HEK293 (cell line): ENCODE measurements at regions of chr20 and their contacts with region 1.

Region 1: DNA sequence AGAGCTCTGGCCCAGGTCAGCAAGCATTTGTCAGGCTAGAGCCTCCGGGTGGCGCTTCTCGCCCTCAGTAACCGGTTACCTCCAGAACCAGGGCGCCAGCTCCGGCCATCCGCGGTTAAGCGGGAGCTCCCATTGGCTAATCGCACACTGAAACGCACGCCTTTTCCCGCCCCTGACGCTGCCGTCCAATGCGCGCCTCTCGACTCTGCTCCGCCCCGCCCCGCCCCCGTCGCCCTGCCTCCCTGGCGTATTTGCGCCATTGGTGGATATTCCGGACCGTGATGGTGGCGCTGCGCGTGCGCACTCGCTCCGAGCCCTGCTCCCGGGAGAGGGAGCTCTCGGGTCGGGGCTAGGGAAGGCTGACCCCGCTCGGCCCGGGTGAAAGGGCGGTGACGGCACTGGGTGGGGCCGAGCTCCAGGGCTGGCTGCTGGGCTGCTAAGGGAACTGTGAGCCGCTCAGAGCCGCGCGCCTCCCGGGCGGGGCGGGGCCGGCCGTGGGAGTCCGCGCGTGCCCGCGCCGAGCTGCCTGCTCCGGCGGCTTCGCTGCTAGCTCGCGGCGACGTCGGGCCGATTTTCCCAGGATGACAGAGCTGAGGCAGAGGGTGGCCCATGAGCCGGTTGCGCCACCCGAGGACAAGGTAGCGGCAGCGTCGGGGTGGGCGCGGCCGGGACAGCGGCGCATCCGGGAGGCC is at the start of gene CDS2:
- H3K4me3 ChIP-seq: peak within 1 kb of the TSS; percentile 93
- H3K27ac ChIP-seq: peak within 1 kb of the TSS; percentile 96
- H3K4me1 ChIP-seq: peaks cover 7% of the 10 kb centered on the region
- CTCF ChIP-seq: peak; percentile 91

Region 2: DNA sequence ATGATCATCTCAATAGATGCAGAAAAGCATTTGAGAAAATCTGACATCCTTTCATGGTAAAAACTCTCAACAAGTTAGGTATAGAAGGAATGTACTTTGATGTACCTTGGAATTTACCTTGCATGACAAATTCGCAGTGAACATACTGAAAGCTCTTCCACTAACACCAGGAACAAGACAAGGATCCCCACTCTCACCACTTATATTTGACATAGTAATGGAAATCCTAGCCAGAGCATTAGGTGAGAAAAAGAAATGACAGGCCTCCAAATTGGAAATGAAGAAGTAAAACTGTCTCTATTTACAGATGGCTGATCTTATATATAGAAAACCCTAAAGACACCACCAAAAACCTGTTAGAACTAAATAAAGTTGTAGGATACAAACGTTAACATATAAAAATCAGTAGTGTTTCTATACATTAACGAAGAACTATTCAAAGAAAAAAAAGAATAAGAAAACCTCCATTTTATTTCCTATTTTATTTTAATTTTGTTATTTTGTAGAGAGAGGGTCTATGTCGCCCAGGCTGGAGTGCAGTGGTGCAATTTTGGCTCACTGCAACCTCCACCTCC is 33.8 kb before region 1 on chr20:
- CTCF ChIA-PET with region 1: no interaction called
- POLR2A ChIA-PET with region 1: no interaction called
- H3K4me3 ChIP-seq: no peak overlapping the region
- H3K27ac ChIP-seq: no peak overlapping the region
- H3K4me1 ChIP-seq: peaks cover 2% of the 10 kb centered on the region; the same call in 1 of the 2 replicates
- CTCF ChIP-seq: no peak

Region 3: DNA sequence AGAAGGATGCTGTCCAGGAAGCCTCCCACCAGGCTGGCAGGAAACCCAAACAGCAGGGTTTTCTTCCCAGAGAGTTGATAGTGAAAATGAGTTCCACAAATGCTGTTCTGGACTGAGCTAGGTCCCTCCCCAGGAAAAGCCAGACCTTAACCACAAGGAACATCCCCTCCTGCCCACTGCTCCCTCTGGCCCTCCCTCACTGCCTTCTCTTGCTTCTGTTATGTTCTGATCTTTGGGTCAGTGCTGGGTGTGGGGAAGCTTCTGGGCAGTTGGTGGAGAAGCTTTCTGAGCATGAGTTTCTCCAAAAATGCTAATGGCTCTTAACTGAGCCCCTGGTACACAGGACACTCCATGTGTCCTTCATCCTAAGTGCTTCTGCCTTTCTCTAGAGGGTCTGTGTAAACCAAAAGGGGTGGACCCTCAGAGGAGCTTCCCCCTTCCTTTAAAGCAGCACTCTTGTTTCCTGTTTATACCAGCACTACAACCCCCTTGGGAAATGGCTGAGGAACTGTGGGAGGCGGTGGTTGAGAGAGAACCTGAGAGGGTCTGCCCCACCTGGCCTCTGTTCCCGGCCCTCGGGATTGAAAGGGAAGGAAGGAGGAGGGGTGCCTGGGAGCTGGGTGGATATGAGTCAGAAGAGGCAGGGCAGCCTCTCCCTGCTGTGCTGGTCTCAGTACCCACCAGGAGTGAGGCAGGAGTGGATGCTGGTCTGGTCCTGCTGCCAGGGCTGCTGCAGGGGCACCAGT is 42.2 kb after region 1 on chr20:
- CTCF ChIA-PET with region 1: interaction called, 19 read pairs
- POLR2A ChIA-PET with region 1: interaction called, 9 read pairs
- H3K4me3 ChIP-seq: no peak overlapping the region
- H3K27ac ChIP-seq: no peak overlapping the region
- H3K4me1 ChIP-seq: peaks cover 15% of the 10 kb centered on the region
- CTCF ChIP-seq: no peak

Region 4: GRCh38 chr20:5191829-5192569 is 65.3 kb after region 1 on chr20:
- CTCF ChIA-PET with region 1: interaction called, 160 read pairs
- POLR2A ChIA-PET with region 1: interaction called, 26 read pairs
- H3K4me3 ChIP-seq: no peak overlapping the region
- H3K27ac ChIP-seq: no peak overlapping the region
- H3K4me1 ChIP-seq: no peaks in the 10 kb centered on the region
- CTCF ChIP-seq: peak; percentile 73

Region 5: DNA sequence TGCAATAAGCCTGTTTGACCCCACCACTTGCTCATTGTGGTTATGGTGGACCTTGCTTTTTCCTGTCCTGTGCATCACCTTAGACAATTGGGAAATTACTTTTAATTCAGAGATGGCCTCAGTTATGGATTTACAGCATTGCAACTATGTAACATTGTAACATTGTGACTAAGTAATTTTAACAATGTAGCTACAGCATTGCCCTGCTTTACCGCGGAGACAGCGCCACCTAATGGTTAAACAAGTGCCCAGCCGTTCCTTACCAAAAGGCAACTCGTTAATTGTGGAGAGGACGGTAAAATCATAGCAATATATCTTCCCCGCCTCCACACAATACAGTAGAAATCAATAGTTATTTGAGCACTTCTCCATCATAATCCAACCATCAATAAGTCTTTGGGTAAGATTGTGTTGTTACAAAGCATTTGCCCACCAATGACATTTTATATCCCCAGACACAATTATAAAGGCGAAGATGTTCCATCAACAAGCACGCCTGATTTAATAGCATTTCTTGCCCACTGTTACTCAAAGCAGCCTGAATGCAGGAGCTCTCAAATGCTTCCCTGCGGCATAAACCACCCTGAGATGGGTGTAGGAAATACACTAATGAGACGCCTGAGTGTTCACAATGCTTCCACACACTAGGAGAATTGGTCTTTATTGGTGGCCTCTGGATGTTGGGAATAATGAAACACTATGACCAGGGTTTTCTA is 96.4 kb after region 1 on chr20:
- CTCF ChIA-PET with region 1: interaction called, 15 read pairs
- POLR2A ChIA-PET with region 1: interaction called, 7 read pairs
- H3K4me3 ChIP-seq: no peak overlapping the region
- H3K27ac ChIP-seq: no peak overlapping the region
- H3K4me1 ChIP-seq: no peaks in the 10 kb centered on the region
- CTCF ChIP-seq: peak; percentile 42; the same call in 1 of the 2 replicates